ENCODE measurements at regions of chr11 and their contacts with region 1.

Region 1: GRCh38 chr11:1389103-1389931 is 417 bp upstream of the BRSK2 start:
- DNase-seq: peak; percentile 96
- H3K4me3 ChIP-seq: peak overlapping the region in 1 of 3 experiments; percentile 32
- H3K27ac ChIP-seq: no peak overlapping the region
- H3K4me1 ChIP-seq: peaks cover 3% of the 10 kb centered on the region
- H3K27me3 ChIP-seq: peaks cover 22 to 29% of the 10 kb centered on the region in 2 experiments
- CTCF ChIP-seq: peak in 1 of 2 donors; percentile 13
- POLR2A ChIP-seq: no peak

Region 2: DNA sequence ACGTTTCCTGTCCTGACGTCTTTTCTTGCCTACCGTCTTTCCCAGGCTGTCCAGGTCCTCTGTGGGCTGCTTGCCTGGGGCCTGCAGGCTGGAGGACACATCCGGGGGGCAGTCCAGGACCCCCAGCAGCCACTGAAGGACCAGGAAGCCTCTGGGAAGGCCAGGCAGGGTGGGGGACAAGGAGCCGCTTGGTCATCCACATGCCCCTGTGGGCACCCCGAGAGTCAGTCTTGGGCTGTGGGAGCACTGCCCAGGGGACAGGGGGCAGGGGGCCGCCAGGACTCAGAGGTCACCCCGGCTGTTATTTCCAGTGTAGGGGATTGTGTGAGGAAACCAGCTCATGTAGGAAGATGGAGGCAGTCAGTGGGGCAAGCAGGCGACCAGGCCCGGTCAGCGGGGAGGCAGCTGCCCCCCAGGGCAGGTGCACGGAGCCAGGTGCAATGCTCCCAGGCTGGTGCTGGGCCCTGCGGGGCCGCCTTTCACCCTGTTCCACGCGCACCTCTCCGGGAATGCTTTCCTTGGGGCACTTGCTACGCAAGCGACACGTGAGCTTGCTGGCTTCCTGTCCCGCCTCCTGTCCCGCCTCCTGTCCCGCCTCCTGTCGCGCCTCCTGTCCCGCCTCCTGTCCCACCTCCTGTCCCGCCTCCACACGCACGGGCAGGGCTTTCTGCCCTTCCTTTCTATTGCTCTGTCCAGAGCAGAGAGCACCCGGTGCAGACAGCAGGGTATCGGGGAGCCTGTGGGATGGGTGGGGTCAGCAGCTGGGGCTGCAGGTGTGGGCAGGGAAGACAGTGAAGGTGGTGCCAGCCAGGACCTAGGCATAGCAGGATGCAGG is 126.9 kb before region 1 on chr11:
- CTCF ChIA-PET with region 1: no interaction called
- POLR2A ChIA-PET with region 1: no interaction called
- dilution Hi-C with region 1: no loop called
- intact Hi-C with region 1: loop called (anchors 5 kb)
- DNase-seq: peak; percentile 88
- H3K4me3 ChIP-seq: peak overlapping the region in 2 of 3 experiments; percentile 36 to 53
- H3K27ac ChIP-seq: peak overlapping the region; percentile 52
- H3K4me1 ChIP-seq: peaks cover 4% of the 10 kb centered on the region
- H3K27me3 ChIP-seq: no peaks in the 10 kb centered on the region
- CTCF ChIP-seq: no peak
- POLR2A ChIP-seq: peak; percentile 76

Region 3: GRCh38 chr11:1309498-1310317 is 79.6 kb before region 1 on chr11 and contains the start of gene TOLLIP:
- CTCF ChIA-PET with region 1: no interaction called
- POLR2A ChIA-PET with region 1: no interaction called
- dilution Hi-C with region 1: no loop called
- intact Hi-C with region 1: loop called (anchors 10 kb)
- DNase-seq: peak; percentile 96
- H3K4me3 ChIP-seq: peak within 1 kb of the TSS; percentile 59 to 84 (median 69)
- H3K27ac ChIP-seq: peak within 1 kb of the TSS; percentile 27
- H3K4me1 ChIP-seq: peaks cover 8% of the 10 kb centered on the region
- H3K27me3 ChIP-seq: peaks cover 0 to 2% of the 10 kb centered on the region in 2 experiments
- CTCF ChIP-seq: peak in 1 of 2 donors; percentile 7
- POLR2A ChIP-seq: peak; percentile 92
- total RNA-seq, gene TOLLIP: 49.1 and 49.6 TPM in 2 replicates

Region 4: GRCh38 chr11:1351278-1351937 is 37.9 kb before region 1 on chr11:
- CTCF ChIA-PET with region 1: no interaction called
- POLR2A ChIA-PET with region 1: no interaction called
- dilution Hi-C with region 1: no loop called
- intact Hi-C with region 1: no loop called
- DNase-seq: no peak
- H3K4me3 ChIP-seq: no peak overlapping the region
- H3K27ac ChIP-seq: no peak overlapping the region
- H3K4me1 ChIP-seq: no peaks in the 10 kb centered on the region
- H3K27me3 ChIP-seq: no peaks in the 10 kb centered on the region
- CTCF ChIP-seq: no peak
- POLR2A ChIP-seq: no peak